ENCODE measurements at regions of chr6 and their contacts with region 1.

Region 1: GRCh38 chr6:32195652-32195901 is 3.1 kb upstream of the GPSM3 start:
- DNase-seq: peak; percentile 99
- ATAC-seq: 0 out of 2 replicates have a peak, but pooled peaks have one; percentile 87
- H3K4me3 ChIP-seq: peak overlapping the region; percentile 77; the same call in 1 of the 2 replicates
- H3K27ac ChIP-seq: peak overlapping the region; percentile 95; the same call in 1 of the 2 replicates
- H3K4me1 ChIP-seq: peaks cover 28% of the 10 kb centered on the region
- H3K27me3 ChIP-seq: no peaks in the 10 kb centered on the region
- CTCF ChIP-seq: no peak

Region 2: GRCh38 chr6:31922942-31923341 is 272.6 kb before region 1 on chr6:
- CTCF ChIA-PET with region 1: no interaction called
- POLR2A ChIA-PET with region 1: no interaction called
- intact Hi-C with region 1: no loop called
- DNase-seq: peak; percentile 35
- ATAC-seq: 0 out of 2 replicates have a peak, but pooled peaks have one; percentile 38
- H3K4me3 ChIP-seq: no peak overlapping the region
- H3K27ac ChIP-seq: no peak overlapping the region
- H3K4me1 ChIP-seq: no peaks in the 10 kb centered on the region
- H3K27me3 ChIP-seq: no peaks in the 10 kb centered on the region
- CTCF ChIP-seq: peak; percentile 43; the same call in 1 of the 2 replicates

Region 3: DNA sequence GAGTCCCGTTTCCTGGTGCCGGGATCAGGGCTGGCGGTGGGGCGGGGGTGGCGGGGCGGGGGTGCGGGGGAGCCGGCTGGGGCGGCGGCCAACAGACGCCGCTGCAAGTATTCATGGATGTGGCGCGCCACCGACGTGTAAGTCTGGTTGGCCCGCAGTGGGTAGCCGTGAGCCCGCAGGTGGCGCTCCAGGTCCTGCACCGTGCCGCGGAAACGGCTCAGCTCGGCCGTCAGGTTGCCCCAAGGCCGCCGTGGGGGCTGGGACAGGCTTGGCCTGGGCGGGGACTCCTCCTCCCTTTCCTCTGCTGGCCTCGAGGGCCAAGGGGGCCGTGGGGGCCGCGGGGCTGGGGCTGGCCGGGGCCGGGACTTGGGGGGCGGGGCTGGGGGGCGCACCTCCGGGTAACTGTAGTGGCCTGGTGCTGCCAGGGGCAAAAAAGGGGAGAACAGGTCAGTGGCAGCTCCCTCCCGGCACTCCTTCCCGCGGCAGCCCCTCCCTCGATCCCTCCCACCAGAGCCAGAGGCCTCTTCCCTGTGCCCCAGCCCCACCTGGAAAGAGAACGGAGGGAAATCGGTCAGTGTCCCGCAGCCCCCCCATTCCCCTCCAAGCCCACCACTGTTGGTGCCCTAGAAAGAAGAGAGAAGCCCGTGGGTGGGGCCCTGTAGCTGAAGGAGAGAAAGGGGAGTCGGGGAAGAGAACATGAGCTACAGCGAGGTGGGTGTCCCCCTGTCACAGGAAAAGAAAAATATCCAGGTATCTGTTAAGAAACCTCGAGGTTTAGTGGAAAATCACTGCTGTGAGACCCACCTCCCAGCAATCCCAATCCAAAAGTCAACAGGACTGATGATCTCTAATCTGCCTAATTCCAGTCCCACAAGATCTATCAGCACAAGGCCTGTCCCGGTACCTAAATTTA is 107.7 kb before region 1 on chr6:
- CTCF ChIA-PET with region 1: no interaction called
- POLR2A ChIA-PET with region 1: no interaction called
- intact Hi-C with region 1: loop called (anchors 1 kb)
- DNase-seq: peak; percentile 88
- ATAC-seq: peak; percentile 71
- H3K4me3 ChIP-seq: no peak overlapping the region
- H3K27ac ChIP-seq: no peak overlapping the region
- H3K4me1 ChIP-seq: peaks cover 31% of the 10 kb centered on the region
- H3K27me3 ChIP-seq: no peaks in the 10 kb centered on the region
- CTCF ChIP-seq: peak; percentile 54

Region 4: DNA sequence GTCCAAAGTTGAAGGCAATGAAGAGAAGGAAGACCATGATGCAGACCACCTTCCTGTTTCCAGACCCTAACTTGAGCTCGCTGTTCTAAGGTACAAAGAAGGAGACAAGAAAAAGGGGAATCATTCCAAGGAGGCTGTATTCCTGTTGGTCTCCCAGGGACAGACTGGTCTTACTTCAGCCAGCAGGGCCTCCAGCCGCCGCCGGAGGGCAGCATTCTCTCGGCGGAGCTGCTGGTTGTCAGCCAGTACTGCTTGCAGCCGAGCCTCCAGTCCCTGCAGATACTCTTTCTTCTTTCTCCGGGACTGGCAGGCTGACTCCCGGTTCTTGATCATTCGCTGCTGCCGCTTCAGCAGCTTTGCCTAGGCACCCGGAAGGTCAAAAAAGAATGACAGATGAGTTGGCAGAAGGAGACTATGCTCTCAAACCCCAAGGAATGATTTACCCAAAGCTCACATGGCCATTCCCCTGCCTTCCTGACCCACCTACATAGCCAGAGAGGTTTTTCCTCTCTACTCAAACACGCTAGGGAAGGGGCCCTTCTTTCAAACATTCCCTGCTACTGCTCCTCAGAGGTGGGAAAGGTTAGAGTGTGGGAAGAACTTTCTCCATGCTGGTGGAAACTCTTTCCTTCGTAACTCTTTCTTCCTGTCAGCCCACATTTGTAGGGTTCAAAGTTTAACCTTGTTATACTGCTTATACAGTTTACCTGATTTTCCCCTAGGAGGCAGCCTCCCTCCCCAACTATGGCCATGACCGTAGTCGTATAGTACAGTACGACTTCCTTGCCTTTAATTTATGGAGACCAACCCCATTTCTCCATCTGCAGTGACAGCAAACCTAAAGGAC is 76.6 kb before region 1 on chr6:
- CTCF ChIA-PET with region 1: interaction called, 10 read pairs
- POLR2A ChIA-PET with region 1: no interaction called
- intact Hi-C with region 1: no loop called
- DNase-seq: peak; percentile 83
- ATAC-seq: peak; percentile 50
- H3K4me3 ChIP-seq: no peak overlapping the region
- H3K27ac ChIP-seq: no peak overlapping the region
- H3K4me1 ChIP-seq: peaks cover 21% of the 10 kb centered on the region
- H3K27me3 ChIP-seq: no peaks in the 10 kb centered on the region
- CTCF ChIP-seq: peak; percentile 92

Region 5: DNA sequence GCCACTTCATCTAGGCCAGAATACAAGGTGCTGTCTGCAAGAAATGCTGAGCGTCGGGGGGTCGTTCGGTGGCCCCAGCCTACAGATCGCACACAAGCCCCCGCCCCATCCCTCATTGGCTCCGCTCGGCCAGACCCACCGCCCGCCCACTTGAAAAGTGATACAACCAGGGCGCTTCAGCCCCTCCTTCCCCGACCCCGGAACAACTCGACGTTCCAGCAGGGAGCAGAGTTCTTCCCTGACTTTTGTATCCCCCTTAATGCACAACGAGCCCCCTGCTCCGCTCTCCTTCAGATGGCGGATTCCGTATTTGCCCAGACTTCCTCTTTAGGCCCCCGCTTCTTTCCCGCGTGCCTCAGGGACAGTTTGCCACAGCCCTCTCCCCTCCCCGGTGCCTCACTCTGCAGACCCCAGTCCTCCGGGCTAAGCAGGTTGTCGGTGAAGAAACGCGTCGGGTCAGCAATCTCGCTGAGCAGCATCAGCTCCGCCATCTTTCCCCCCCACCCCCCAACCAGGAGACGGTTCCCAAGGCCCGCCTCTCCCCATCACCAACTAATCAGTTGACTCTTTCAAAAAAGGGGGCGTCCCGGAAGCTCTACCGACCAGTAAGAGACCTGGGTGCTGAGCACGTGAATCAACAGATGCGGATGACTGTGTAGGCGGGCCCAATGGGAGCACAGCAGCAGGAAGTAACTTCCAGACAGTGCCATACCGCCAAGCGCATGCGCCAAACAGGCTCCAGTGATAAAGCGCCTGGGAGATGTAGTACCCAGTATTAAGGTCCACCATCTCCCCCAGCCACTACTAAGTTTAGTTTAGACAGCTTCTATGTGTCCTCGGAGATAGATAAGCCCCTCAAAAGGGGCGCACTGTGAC is 67.6 kb before region 1 on chr6 and contains the start of gene ATF6B:
- CTCF ChIA-PET with region 1: no interaction called
- POLR2A ChIA-PET with region 1: interaction called, 17 read pairs
- intact Hi-C with region 1: loop called (anchors 1 kb)
- DNase-seq: peak; percentile 98
- ATAC-seq: peak; percentile 89
- H3K4me3 ChIP-seq: peak within 1 kb of the TSS; percentile 90
- H3K27ac ChIP-seq: peak within 1 kb of the TSS; percentile 47
- H3K4me1 ChIP-seq: peaks cover 25% of the 10 kb centered on the region
- H3K27me3 ChIP-seq: no peaks in the 10 kb centered on the region
- CTCF ChIP-seq: no peak
- total RNA-seq, gene ATF6B: 33.4 and 35.7 TPM in 2 replicates

Region 6: DNA sequence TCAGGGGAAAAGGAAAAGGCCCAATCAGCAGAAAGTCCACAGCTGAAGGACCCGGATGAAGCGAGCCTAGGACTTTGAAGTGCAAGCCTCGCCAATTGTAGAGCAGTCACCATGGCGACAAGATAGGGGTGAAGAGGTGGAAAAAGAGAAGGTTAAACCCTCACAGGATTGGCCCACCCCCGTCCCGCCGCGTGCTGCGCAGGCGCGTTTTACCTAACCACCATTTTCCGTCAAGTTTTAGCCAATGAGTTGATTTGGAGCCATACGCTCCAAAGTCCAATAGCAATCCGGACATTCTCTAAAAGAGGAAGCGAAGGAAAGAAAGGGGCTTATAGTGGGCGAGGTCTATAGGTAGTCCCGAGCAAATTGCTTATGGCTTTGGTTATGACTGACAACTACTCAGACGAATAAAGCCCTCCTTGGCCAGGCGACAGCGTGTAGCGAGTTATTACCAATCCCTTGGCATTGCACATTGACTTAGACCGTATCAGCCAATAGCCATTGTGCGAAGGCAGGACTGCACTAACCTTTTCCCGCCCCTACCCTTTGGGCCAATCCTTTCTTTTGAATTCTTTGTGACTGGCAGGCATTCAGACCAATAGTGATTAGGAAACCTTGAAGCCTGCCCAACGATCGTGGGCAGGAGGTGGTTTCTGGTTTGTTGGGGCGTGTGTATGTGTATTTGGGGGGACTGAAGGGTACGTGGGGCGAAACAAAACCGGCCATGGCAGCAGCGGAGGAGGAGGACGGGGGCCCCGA is 17.6 kb before region 1 on chr6 and contains the start of gene RNF5:
- CTCF ChIA-PET with region 1: interaction called, 4 read pairs
- POLR2A ChIA-PET with region 1: interaction called, 3 read pairs
- intact Hi-C with region 1: loop called (anchors 1 kb)
- DNase-seq: peak; percentile 100
- ATAC-seq: peak; percentile 86
- H3K4me3 ChIP-seq: peak within 1 kb of the TSS; percentile 94
- H3K27ac ChIP-seq: peak within 1 kb of the TSS; percentile 83
- H3K4me1 ChIP-seq: peaks cover 33% of the 10 kb centered on the region
- H3K27me3 ChIP-seq: no peaks in the 10 kb centered on the region
- CTCF ChIP-seq: no peak
- total RNA-seq, gene RNF5: 69.0 and 80.1 TPM in 2 replicates

Region 7: GRCh38 chr6:32413427-32414047 is 218.0 kb after region 1 on chr6:
- CTCF ChIA-PET with region 1: no interaction called
- POLR2A ChIA-PET with region 1: no interaction called
- intact Hi-C with region 1: loop called (anchors 2 kb)
- DNase-seq: peak; percentile 83
- ATAC-seq: peak; percentile 79
- H3K4me3 ChIP-seq: peak overlapping the region; percentile 43; the same call in 1 of the 2 replicates
- H3K27ac ChIP-seq: no peak overlapping the region
- H3K4me1 ChIP-seq: peaks cover 4% of the 10 kb centered on the region; the same call in 1 of the 2 replicates
- H3K27me3 ChIP-seq: peaks cover 9% of the 10 kb centered on the region
- CTCF ChIP-seq: peak; percentile 92